ENCODE measurements at regions of chr3 and their contacts with region 1.

Region 1: DNA sequence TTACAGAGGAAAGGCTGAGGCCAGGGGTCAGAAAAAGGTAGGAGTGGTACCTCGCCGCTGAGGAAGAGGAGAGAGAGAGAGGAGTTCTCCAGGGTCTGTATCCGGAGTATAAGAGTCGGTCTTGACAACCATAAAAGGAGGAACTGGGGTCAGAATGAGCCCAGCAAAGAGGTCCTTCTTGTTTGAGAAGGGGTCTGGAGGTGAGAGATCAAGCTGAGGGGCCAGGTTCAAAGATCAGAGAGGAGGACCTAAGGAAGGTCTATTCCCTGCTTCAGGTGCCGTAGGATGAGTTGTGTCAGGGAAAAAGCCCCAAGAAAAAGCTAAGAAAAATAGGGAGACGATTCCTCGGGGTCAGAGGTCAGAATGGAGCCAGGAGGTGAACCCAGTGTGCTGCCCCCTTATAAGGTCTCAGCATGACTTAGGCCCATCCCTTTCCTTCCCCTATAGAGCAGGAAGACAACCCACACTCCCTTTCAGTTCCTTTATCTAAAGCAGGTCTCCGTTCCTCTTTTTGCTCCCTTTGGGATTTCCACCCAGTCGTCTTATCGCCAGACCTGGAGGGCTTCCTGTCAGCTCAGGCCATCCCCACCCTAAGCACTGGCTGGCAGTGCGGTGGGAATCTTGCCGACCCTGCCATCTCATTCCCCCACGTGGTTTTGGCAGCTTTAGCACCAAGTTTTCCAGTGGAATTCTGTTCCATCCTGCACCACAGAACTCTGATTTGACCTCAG is 651 bp downstream of the MTMR14 start:
- DNase-seq: peak in 1 of 2 donors; percentile 29
- ATAC-seq: peak in 1 of 3 donors; percentile 0
- H3K4me3 ChIP-seq: peak overlapping the region; percentile 85
- H3K4me3 Mint-ChIP-seq: peak overlapping the region; percentile 100
- H3K27ac ChIP-seq: peak overlapping the region; percentile 81
- H3K27ac Mint-ChIP-seq: peak overlapping the region; percentile 90 to 96
- H3K4me1 ChIP-seq: peaks cover 30% of the 10 kb centered on the region
- H3K4me1 Mint-ChIP-seq: peaks cover 26 to 28% of the 10 kb centered on the region in 2 donors
- H3K27me3 ChIP-seq: no peaks in the 10 kb centered on the region
- H3K27me3 Mint-ChIP-seq: no peaks in the 10 kb centered on the region
- CTCF ChIP-seq: no peak

Region 2: GRCh38 chr3:9098569-9099367 is 551.2 kb before region 1 on chr3:
- intact Hi-C with region 1: no loop called
- DNase-seq: no peak
- ATAC-seq: no peak
- H3K4me3 ChIP-seq: no peak overlapping the region
- H3K4me3 Mint-ChIP-seq: no peak overlapping the region
- H3K27ac ChIP-seq: no peak overlapping the region
- H3K27ac Mint-ChIP-seq: no peak overlapping the region
- H3K4me1 ChIP-seq: no peaks in the 10 kb centered on the region
- H3K4me1 Mint-ChIP-seq: no peaks in the 10 kb centered on the region
- H3K27me3 ChIP-seq: no peaks in the 10 kb centered on the region
- H3K27me3 Mint-ChIP-seq: no peaks in the 10 kb centered on the region
- CTCF ChIP-seq: no peak

Region 3: DNA sequence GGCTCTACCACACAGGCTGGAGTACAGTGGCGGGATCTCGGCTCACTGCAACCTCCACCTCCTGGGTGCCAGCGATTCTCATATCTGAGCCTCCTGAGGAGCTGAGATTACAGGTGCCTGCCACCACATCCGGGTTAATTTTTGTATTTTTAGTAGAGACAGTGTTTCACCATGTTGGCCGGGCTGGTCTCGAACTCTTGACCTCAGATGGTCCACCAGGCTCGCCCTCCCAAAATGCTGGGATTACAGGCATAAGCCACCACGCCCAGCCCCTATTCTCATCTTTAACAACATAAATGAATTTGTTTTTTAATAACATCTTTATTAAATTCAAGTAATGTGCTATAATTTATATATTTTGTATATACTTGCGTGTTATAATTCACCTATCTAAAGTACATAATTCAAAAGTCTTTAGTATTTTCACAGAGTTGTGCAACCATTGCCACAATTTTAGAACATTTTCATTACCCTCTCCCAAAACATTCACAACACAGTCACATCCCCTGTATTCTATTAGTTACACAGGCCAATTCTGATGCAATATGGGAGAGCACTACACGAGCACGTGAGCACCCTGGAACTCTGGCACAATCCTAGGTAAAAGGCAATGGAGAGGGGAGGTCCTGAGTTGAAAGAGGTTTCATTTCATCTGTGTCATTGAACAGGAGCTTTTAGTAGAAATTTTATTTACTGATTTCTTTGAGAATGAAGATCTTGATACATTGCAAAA is 21.9 kb before region 1 on chr3:
- intact Hi-C with region 1: no loop called
- DNase-seq: no peak
- ATAC-seq: no peak
- H3K4me3 ChIP-seq: no peak overlapping the region
- H3K4me3 Mint-ChIP-seq: no peak overlapping the region
- H3K27ac ChIP-seq: no peak overlapping the region
- H3K27ac Mint-ChIP-seq: no peak overlapping the region
- H3K4me1 ChIP-seq: no peaks in the 10 kb centered on the region
- H3K4me1 Mint-ChIP-seq: no peaks in the 10 kb centered on the region
- H3K27me3 ChIP-seq: no peaks in the 10 kb centered on the region
- H3K27me3 Mint-ChIP-seq: peaks cover 7 to 25% of the 10 kb centered on the region in 2 donors
- CTCF ChIP-seq: no peak

Region 4: DNA sequence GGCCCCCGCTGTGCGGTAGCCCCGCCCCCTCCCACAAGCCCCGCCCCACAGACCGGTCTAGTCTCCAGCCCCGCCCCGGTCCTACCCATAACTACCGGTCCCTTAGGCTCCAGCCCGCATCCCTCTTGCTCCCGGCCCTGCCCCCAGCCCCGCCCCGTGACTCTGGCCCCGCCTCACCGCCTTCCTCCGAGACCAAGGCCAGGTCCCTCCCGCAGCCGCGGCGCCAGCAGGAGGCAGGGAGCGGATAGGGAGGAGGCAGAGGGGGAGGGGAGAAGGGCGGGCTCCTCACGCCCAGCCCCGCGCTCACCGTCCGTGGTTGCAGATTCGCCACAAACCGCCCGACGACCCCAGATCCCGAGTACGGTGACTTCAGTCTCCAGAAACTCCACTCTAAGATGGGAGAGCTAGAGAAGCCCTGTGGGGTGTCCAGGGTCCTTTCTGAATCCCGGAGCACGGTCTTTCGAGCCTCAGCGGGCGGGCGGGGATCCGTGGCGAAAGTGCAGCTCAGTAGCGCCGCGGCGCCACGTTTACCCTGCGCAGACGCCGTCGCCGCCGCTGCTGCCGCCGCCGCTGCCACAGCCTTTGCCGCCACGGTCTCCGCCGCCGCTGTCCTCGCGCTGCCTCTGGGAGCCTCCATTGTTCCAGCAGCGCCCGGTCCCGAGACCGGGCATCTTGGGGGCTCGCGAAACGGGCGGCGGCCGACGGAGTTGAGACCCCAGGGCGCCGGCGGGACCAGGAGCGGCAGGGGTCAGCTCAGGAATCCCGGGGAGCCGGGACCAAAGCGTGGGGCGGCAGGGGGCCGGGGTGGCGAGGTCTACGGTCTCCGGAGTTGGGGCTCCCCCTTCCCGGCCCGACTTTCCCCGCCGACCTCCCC is 81.5 kb after region 1 on chr3 and contains the start of gene BRPF1:
- intact Hi-C with region 1: loop called (anchors 1 kb)
- DNase-seq: peak; percentile 93 to 99
- ATAC-seq: peak; percentile 89 to 96 (median 90)
- H3K4me3 ChIP-seq: peak within 1 kb of the TSS; percentile 96
- H3K4me3 Mint-ChIP-seq: peak within 1 kb of the TSS; percentile 98
- H3K27ac ChIP-seq: peak within 1 kb of the TSS; percentile 96
- H3K27ac Mint-ChIP-seq: peak within 1 kb of the TSS; percentile 93 to 94
- H3K4me1 ChIP-seq: peaks cover 40% of the 10 kb centered on the region
- H3K4me1 Mint-ChIP-seq: peaks cover 49 to 65% of the 10 kb centered on the region in 2 donors
- H3K27me3 ChIP-seq: no peaks in the 10 kb centered on the region
- H3K27me3 Mint-ChIP-seq: no peaks in the 10 kb centered on the region
- CTCF ChIP-seq: no peak
- total RNA-seq, gene BRPF1: 45.1 to 72.1 (median 66.5) TPM

Measured in natural killer cell (primary cell).